Breast epithelium (tissue), 4 donors: ENCODE measurements at regions of chr16 and their contacts with region 1.

Region 1: GRCh38 chr16:87765776-87766484 is at the start of gene KLHDC4:
- DNase-seq: peak; percentile 81 to 85
- H3K4me3 ChIP-seq: peak within 1 kb of the TSS; percentile 88 to 99 (median 91)
- H3K27ac ChIP-seq: peak within 1 kb of the TSS; percentile 87 to 89
- H3K4me1 ChIP-seq: no peaks in the 10 kb centered on the region
- H3K27me3 ChIP-seq: no peaks in the 10 kb centered on the region
- CTCF ChIP-seq: no peak
- POLR2A ChIP-seq: peak; percentile 41
- total RNA-seq, gene KLHDC4: 25.9 to 35.6 (median 32.4) TPM

Region 2: DNA sequence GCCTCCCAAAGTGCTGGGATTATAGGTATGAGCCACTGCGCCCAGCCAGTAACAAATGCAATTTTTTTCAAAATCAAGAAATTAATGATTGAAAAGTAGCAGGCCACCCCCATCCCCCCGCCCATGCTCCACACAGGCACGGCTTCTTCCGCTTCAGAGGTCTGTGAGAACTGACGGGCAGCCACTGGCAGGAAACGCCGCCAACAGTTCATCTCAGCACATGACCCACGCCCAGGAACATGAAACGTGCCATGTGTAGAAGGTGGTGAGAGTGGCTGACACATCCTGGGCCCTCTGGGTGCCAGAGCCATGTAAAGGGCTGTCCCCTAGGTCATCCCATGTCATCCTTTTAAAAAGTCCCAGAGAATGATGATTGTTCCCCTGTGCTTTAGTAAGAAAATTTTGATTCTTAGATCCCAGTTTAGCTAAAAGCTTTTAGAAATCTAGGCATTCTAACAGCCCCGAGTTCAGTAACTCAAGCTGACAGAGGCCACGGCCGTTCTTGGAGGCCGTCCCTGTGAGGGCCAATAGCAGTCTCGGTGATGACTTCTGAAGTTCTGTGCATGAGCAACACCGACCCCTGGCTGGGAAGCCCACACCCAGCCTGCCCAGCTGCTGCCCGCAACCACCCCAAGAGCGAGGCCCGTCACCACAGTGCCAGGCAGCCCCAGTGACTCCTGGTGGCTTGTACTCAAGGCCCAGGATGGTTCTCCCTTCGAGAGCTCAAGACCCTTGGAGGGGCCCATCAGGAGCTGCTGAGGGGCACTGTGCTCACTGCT is 52.3 kb before region 1 on chr16:
- intact Hi-C with region 1: loop called (anchors 2 kb)
- DNase-seq: no peak
- H3K4me3 ChIP-seq: no peak overlapping the region
- H3K27ac ChIP-seq: no peak overlapping the region
- H3K4me1 ChIP-seq: no peaks in the 10 kb centered on the region
- H3K27me3 ChIP-seq: no peaks in the 10 kb centered on the region
- CTCF ChIP-seq: no peak
- POLR2A ChIP-seq: no peak